ENCODE measurements at regions of chr20 and their contacts with region 1.

Region 1: DNA sequence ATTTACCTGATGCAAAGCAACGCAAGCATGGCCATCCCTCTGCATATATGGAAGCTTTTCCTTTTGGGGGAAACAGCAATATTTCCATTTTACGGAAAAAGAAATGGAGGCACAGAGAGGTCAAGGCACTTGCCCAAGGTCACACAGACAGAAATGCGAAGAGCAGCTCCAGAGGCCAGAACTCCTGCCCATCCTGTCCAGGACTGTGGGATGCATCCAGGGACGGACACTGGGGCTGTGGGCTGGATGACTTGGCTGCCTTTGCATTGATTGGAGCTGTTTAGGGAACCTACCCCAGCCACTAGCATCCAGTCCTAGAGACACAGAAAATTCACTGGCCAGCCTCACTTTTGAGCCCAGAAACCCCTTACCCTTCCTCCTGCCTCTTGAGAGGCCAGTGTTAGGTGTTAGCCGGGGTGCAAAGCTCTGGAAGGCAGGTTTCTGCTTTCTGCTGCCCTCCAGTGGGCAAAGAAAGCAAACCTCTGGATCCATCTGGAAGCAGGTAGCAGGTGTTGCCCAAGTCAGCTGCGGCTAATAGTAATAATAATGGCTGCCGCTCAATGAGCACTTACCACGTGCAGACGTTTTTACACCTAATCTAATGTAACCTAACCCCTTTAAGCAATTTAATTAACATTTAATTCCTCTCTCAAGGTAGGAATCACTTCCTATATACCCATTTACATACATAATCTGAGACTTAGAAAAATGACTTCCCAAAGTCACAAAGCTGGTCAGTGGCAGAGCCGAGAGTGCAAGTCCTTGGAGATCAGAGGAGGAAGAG is 31.7 kb upstream of the CCN5 start:
- DNase-seq: peak; percentile 75 to 91
- ATAC-seq: peak; percentile 86 to 87
- H3K4me3 ChIP-seq: no peak overlapping the region
- H3K27ac ChIP-seq: peak overlapping the region in 1 of 2 experiments; percentile 89; a peak in 1 of 6 replicates
- H3K4me1 ChIP-seq: peaks cover 22% of the 10 kb centered on the region
- CTCF ChIP-seq: peak; percentile 83
- EP300 ChIP-seq: no peak
- POLR2A ChIP-seq: no peak
- RAD21 ChIP-seq: peak; percentile 77 to 81

Region 2: GRCh38 chr20:44609511-44610312 is 73.7 kb before region 1 on chr20:
- CTCF ChIA-PET with region 1: interaction called, 27 read pairs
- POLR2A ChIA-PET with region 1: no interaction called
- DNase-seq: peak; percentile 91 to 95
- ATAC-seq: peak; percentile 98 to 99
- H3K4me3 ChIP-seq: peak overlapping the region; percentile 29; the same call in 1 of the 3 replicates
- H3K27ac ChIP-seq: peak overlapping the region; percentile 76 to 85
- H3K4me1 ChIP-seq: peaks cover 11% of the 10 kb centered on the region
- CTCF ChIP-seq: peak; percentile 89
- EP300 ChIP-seq: no peak
- POLR2A ChIP-seq: peak; percentile 39; the same call in 1 of the 2 replicates
- RAD21 ChIP-seq: peak; percentile 96 to 98

Region 3: DNA sequence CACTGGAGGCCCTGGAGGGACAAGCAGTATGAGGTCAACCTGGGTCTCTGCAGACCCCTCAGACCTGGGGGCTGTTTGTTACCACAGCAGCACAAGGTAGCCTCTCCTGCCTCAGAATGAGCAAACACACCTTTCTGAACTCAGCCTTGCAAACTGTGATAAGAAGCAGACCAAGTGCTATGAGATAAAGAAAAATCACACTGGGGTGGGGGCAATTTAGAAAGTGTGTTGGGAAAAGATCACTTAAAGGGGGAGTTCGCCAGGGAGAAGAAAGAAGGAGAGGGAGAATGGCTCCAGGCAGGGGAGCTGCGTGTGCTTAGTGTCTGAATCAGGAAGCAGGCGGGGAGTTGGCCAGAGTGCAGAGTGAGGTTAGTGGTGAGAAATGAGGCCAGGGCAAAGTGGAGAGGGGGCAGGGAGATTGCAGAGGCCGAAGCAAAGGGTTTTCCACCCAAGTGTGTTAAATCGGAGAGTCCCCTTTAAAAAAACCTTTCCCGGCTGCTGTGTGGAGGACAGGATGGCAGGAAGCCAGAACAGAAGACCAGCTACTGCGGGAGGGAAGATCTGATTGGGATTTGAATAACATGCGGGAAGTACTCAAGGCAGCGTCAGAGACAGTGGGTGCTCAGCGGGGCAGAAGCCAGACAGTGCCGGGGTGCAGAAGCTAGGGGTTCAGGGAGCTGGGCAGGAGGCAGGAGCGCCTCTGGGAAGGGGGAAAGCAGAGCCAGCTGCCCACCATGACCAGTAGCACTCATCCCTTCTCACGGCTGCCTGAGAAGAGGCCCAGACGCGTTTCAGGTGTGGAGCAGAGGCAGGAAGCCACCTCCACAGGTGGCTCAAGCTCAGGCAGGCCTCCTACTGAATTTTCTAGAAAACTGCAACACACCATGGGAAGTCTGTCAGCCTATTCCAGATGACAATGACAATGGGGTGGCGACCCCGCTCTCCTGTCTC is 41.0 kb before region 1 on chr20:
- CTCF ChIA-PET with region 1: interaction called, 126 read pairs
- POLR2A ChIA-PET with region 1: no interaction called
- DNase-seq: peak; percentile 56 to 85
- ATAC-seq: peak; percentile 66 to 73
- H3K4me3 ChIP-seq: no peak overlapping the region
- H3K27ac ChIP-seq: peak overlapping the region; percentile 83 to 94
- H3K4me1 ChIP-seq: peaks cover 55% of the 10 kb centered on the region
- CTCF ChIP-seq: no peak
- EP300 ChIP-seq: no peak
- POLR2A ChIP-seq: no peak
- RAD21 ChIP-seq: 0 out of 5 replicates have a peak, but pooled peaks of 1 of the 2 experiments have one; percentile 8

Region 4: DNA sequence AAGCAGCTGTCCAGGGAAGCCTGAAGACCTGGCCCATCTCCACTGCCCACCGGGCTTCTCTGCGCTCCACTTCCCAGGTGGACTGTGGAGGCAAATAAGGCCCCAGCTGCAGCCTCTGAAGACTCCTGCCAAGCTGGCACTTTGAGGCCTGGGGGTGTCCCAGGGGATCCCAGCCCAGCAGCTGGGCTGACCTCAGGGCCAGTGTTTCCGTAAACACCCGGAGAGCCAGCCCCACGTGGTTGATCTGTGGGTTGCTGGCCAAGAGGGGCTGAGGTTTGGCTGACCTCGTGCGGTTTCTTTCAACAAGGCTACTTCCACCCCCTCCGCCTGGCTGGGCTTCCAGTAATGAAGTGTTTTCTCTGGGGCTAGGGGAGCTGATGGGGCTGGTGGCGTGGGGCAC is 19.3 kb after region 1 on chr20:
- CTCF ChIA-PET with region 1: interaction called, 58 read pairs
- POLR2A ChIA-PET with region 1: no interaction called
- DNase-seq: no peak
- ATAC-seq: no peak
- H3K4me3 ChIP-seq: no peak overlapping the region
- H3K27ac ChIP-seq: peak overlapping the region; percentile 40 to 79; a peak in 4 of 6 replicates
- H3K4me1 ChIP-seq: peaks cover 47% of the 10 kb centered on the region
- CTCF ChIP-seq: no peak
- EP300 ChIP-seq: no peak
- POLR2A ChIP-seq: no peak
- RAD21 ChIP-seq: no peak

Region 5: DNA sequence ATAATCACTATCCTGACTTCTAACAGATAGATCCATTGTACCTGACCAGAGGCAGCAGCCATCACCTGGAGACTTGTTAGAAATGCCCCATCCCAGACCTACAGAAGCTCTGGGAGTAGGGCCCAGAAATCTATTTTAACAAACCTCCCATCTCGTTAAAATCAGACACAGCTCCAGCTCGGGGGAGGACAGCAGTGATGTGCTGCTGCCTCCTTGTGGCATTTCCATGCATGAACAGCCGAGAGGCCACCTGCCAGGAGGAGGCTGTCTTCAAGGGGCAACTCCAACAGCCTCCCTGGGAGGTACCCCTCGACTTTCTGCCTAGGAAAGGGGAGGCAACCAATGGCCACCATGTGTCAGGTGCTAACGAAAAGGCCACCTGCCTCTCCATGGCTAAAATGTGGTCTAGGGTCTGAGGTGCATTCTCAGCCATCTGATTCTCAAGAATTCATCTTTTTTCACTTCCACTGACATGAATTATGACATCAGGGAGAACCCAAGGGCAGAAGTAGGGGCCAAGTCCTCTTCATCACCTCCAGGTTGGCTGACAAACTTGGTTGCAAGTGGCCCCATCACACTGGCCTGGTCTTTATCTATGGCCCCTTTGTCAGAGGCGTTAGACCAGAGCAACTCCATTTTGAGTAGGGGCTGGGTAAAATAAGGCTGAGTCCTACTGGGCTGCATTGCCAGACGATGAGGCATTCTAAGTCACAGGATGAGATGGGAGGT is 50.0 kb after region 1 on chr20:
- CTCF ChIA-PET with region 1: interaction called, 525 read pairs
- POLR2A ChIA-PET with region 1: interaction called, 6 read pairs
- DNase-seq: peak; percentile 69 to 83
- ATAC-seq: peak; percentile 20 to 46; a peak in 4 of 6 replicates
- H3K4me3 ChIP-seq: no peak overlapping the region
- H3K27ac ChIP-seq: peak overlapping the region; percentile 96 to 98
- H3K4me1 ChIP-seq: peaks cover 67% of the 10 kb centered on the region
- CTCF ChIP-seq: peak; percentile 98
- EP300 ChIP-seq: no peak
- POLR2A ChIP-seq: no peak
- RAD21 ChIP-seq: peak; percentile 100

Region 6: DNA sequence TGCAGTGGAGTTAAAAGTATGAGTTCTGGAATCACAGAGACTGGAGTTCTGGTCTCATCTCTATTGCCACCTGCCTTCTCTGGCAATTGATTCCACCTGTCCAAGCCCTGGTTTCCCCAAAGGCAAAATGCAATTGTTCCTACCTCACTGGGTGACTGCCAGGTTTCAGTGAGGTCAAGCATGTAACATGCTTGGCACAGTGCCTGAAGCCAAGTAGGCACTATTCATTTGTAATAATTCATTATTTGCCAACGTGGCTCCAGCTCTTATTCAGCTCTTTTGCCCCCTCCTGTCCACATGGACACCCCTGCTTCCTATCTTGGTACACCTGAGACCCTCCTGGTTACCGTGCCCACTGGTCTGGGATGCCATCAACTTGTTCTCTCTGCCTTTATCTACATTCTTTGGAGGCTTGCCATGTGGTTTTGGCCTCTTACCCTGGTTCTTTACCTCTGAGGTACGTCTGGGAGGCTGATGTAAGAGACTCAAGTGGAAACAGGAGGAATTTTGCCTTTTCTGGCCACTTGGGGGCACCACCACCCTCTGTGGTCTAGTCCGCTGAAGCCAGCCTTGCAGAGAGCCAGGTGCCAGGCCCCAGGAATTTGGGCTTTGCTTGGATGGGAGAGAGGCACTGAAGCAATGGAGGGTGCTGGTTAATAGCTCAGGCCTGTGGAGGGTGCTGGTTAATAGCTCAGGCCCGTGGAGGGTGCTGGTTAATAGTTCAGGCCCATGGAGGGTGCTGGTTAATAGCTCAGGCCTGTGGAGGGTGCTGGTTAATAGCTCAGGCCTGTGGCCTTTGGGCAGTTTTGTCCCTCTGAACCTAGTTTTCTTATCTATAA is 63.9 kb after region 1 on chr20:
- CTCF ChIA-PET with region 1: interaction called, 119 read pairs
- POLR2A ChIA-PET with region 1: interaction called, 7 read pairs
- DNase-seq: peak; percentile 80 to 86
- ATAC-seq: peak; percentile 65 to 85
- H3K4me3 ChIP-seq: no peak overlapping the region
- H3K27ac ChIP-seq: peak overlapping the region; percentile 62 to 94
- H3K4me1 ChIP-seq: peaks cover 36% of the 10 kb centered on the region
- CTCF ChIP-seq: peak; percentile 82
- EP300 ChIP-seq: no peak; a peak in 1 of 5 replicates
- POLR2A ChIP-seq: no peak
- RAD21 ChIP-seq: peak; percentile 68 to 77

Region 7: DNA sequence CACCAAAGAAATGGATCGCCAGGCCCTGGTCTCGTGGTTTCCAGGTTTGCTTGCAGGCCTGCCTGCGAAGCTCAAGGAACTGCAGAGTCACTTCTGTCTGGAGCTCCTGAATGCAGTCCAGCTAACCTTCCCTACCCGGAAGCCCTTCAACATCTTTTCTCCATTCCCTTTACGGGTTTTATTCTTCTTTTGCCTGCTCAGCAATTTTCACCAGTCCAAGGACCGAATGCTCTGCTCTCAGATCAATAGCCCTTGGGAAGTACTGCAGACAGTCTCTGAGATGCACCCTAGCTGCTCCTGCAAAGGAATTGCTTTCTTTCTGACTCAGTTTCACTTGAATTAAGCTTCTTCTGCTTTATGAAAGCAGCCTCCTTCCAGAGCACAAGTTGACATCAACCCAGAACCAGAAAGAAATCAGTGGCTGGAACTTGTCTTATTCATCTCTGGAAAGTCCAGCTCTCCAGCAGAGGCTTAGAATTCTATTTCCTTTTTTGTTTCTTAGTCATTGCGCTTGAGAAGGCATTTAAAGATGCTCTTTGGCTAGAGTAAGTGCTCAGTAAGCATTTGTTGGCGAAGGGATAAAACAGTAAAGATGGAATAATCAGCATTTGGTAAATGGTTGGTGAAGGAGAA is 183.4 kb after region 1 on chr20:
- CTCF ChIA-PET with region 1: interaction called, 64 read pairs
- POLR2A ChIA-PET with region 1: no interaction called
- DNase-seq: no peak
- ATAC-seq: no peak
- H3K4me3 ChIP-seq: no peak overlapping the region
- H3K27ac ChIP-seq: peak overlapping the region in 1 of 2 experiments; percentile 36; a peak in 2 of 6 replicates
- H3K4me1 ChIP-seq: peaks cover 9% of the 10 kb centered on the region; the same call in 2 of the 3 replicates
- CTCF ChIP-seq: no peak
- EP300 ChIP-seq: no peak
- POLR2A ChIP-seq: no peak
- RAD21 ChIP-seq: no peak